ENCODE measurements at regions of chr18 and their contacts with region 1.

Region 1: DNA sequence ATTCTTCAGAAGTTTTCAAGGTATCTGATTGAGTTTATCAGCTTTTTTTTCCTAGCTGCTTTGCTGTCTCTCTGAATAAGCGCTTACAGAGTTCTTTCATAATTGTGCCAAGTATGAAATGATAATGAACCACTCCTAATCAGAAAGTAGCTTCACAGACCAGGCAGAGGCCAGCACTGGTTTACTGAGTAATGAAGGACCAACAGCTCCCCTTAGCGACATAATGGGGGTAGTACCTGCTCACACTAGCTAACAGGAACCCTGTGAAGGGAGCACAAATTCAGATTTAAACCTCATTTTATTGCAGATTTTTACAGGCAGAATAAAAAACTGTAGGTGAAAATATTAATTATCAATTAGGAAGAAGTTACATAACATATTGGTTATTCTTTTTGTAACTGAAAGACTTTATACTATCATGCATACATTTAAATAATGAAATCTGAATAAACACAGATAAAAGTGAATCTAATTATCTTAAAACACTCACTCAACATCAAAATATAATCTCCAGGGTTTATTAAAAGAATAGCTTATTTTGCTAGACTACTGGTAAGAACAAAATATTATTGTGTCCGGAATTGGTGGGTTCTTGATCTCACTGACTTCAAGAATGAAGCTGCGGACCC is 53.7 kb upstream of the LRRC30 start:
- DNase-seq: peak in 1 of 5 donors; percentile 31
- ATAC-seq: peak; percentile 85 to 91 (median 88)
- H3K4me3 ChIP-seq: no peak overlapping the region
- H3K27ac ChIP-seq: no peak overlapping the region
- H3K4me1 ChIP-seq: no peaks in the 10 kb centered on the region
- H3K27me3 ChIP-seq: peaks cover 0 to 9% (median 0%) of the 10 kb centered on the region in 9 donors
- CTCF ChIP-seq: peak; percentile 46 to 73 (median 62)
- POLR2A ChIP-seq: no peak

Region 2: GRCh38 chr18:6543330-6543908 is 633.8 kb before region 1 on chr18:
- intact Hi-C with region 1: loop called in 2 of 10 experiments (anchors 5 to 10 kb)
- DNase-seq: no peak
- ATAC-seq: no peak
- H3K4me3 ChIP-seq: no peak overlapping the region
- H3K27ac ChIP-seq: no peak overlapping the region
- H3K4me1 ChIP-seq: no peaks in the 10 kb centered on the region
- H3K27me3 ChIP-seq: no peaks in the 10 kb centered on the region
- CTCF ChIP-seq: peak; percentile 34 to 75 (median 60)
- POLR2A ChIP-seq: no peak

Region 3: DNA sequence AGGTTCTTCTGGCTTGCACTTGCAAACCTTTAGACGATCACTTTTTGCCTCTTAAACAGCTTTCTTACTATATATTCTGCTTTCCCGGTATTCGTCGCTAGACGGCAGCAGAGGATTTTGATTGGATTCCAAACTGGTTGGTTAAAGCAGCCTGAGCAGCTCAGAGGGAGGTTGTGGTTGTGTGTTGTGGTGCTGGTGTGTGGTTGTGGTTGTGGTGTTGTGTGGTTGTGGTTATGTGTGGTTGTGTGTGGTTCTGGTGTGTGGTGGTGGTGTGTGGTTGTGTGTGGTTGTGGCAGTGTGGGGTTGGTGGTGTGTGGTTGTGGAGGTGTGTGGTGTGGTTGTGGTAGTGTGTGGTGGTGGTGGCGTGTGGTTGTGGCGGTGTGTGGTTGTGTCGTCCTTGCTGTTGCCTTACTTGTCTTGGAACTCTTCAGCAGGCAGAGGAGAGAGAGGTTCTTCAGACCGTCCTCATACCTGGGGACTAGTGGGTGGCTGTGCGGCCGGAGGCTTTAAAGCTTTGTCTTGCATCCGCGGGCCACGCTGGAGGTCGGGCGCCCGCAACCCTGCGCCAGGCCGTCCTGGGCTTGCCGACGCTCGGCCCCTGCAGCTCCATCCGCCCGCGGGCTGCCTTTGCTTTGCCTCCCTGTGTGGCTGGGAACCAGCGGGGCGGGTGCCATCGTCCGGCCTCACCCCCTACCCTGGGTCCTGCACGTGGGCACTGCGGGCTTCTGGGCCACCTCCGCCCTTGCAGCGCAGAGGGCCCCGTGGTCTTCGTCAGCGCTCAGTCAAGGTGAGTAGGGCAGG is 256.9 kb before region 1 on chr18:
- intact Hi-C with region 1: loop called (anchors 2 to 10 kb)
- DNase-seq: no peak
- ATAC-seq: peak in 2 of 4 donors; percentile 12 to 59
- H3K4me3 ChIP-seq: no peak overlapping the region
- H3K27ac ChIP-seq: no peak overlapping the region
- H3K4me1 ChIP-seq: no peaks in the 10 kb centered on the region
- H3K27me3 ChIP-seq: peaks cover 0 to 8% (median 0%) of the 10 kb centered on the region in 9 donors
- CTCF ChIP-seq: peak; percentile 28 to 64 (median 47)
- POLR2A ChIP-seq: no peak

Region 4: GRCh38 chr18:6939972-6940371 is 237.3 kb before region 1 on chr18:
- intact Hi-C with region 1: no loop called
- DNase-seq: no peak
- ATAC-seq: no peak
- H3K4me3 ChIP-seq: no peak overlapping the region
- H3K27ac ChIP-seq: no peak overlapping the region
- H3K4me1 ChIP-seq: no peaks in the 10 kb centered on the region
- H3K27me3 ChIP-seq: peaks cover 0 to 12% (median 0%) of the 10 kb centered on the region in 9 donors
- CTCF ChIP-seq: no peak
- POLR2A ChIP-seq: no peak

Region 5: DNA sequence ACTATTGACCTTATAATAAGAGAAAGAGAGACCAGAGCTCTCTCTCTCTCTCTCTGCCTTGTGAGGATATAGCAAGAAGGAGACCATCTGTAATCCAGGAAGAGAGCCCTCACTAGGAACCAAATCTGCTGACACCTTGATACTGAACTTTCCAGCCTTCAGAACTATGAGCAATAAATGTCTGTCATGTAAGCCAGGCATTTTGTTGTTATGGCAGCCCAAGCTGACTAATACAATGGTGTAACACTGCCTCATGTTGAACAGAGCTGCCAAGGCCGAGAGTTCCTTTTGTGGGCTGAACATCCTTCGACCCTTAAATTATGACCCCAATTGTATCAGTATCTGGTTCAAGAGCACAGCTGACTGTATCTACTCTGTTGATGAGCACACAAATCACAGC is 161.6 kb after region 1 on chr18:
- intact Hi-C with region 1: no loop called
- DNase-seq: no peak
- ATAC-seq: no peak
- H3K4me3 ChIP-seq: no peak overlapping the region
- H3K27ac ChIP-seq: no peak overlapping the region
- H3K4me1 ChIP-seq: no peaks in the 10 kb centered on the region
- H3K27me3 ChIP-seq: no peaks in the 10 kb centered on the region
- CTCF ChIP-seq: no peak
- POLR2A ChIP-seq: no peak

Measured in heart left ventricle (tissue), 16 donors.